Tibial artery (tissue), 4 donors: ENCODE measurements at regions of chr7 and their contacts with region 1.

Region 1: GRCh38 chr7:123047955-123048354 is 52.5 kb upstream of the TAS2R16 start:
- DNase-seq: no peak
- H3K4me3 ChIP-seq: no peak overlapping the region
- H3K27ac ChIP-seq: no peak overlapping the region
- H3K4me1 ChIP-seq: no peaks in the 10 kb centered on the region
- H3K27me3 ChIP-seq: no peaks in the 10 kb centered on the region
- CTCF ChIP-seq: no peak

Region 2: GRCh38 chr7:121187222-121187621 is 1860.7 kb before region 1 on chr7:
- intact Hi-C with region 1: loop called (anchors 5 kb)
- DNase-seq: no peak
- H3K4me3 ChIP-seq: no peak overlapping the region
- H3K27ac ChIP-seq: no peak overlapping the region
- H3K4me1 ChIP-seq: peaks cover 0 to 11% (median 0%) of the 10 kb centered on the region in 4 donors
- H3K27me3 ChIP-seq: no peaks in the 10 kb centered on the region
- CTCF ChIP-seq: no peak

Region 3: DNA sequence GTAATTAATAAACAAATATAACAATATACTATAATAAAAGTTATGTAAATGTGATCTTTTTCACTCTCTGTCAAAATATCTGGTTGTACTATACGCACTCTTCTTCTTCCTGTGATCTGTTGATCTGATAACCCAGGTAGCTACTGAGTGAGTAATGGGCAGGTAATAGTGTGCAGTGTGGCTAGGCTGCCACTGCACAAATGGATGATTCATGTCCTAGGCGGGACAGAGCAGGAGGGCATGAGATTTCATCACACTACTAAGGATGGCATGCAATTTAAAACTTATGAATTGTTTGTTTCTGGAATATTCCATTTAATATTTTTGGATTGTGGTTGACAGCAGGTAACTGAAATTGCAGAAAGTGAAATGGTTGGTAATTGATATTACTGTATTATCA is 96.9 kb before region 1 on chr7:
- intact Hi-C with region 1: no loop called
- DNase-seq: no peak
- H3K4me3 ChIP-seq: no peak overlapping the region
- H3K27ac ChIP-seq: no peak overlapping the region
- H3K4me1 ChIP-seq: no peaks in the 10 kb centered on the region
- H3K27me3 ChIP-seq: no peaks in the 10 kb centered on the region
- CTCF ChIP-seq: no peak

Region 4: GRCh38 chr7:123209786-123210185 is 161.8 kb after region 1 on chr7:
- intact Hi-C with region 1: no loop called
- DNase-seq: no peak
- H3K4me3 ChIP-seq: no peak overlapping the region
- H3K27ac ChIP-seq: no peak overlapping the region
- H3K4me1 ChIP-seq: no peaks in the 10 kb centered on the region
- H3K27me3 ChIP-seq: no peaks in the 10 kb centered on the region
- CTCF ChIP-seq: no peak